T-cell (primary cell): ENCODE measurements at regions of chr18 and their contacts with region 1.

Region 1: DNA sequence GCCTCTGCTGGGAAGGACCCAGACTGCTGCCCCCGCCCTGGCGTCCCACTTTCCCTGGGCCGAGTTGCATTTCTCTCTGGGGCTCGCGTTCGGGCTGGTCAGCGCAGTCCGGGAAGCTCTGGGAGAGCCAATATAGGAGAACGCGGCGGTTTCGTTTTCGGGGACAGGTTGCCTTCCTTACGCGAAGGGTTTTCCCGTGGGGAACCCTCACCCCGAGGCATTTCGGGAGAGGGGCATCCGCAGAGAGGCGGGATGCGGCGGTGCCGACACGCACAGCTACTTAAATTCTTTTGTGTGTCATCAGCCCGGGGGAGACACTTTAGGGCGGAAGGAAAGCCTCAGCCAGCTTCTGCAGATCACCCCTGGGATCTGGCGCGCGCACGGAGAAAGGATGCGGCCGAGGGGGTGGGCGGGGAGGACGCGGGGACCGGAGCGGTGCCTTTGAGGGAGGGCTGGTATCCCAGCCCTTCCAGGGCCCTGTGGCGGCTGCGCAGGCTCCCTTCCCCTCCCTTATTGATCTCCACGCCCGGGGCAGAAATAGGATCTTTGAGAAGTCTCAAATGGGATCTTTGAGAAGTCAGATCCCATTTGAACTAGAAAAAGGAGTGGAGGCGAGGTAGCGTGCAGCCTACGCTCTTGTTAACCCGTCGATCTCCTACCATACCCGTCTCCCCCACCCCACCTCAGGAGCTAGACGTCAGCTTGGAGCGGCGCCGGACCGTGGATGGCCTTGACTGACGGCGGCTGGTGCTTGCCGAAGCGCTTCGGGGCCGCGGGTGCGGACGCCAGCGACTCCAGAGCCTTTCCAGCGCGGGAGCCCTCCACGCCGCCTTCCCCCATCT is 1.3 kb downstream of the GATA6 start:
- DNase-seq: peak in 1 of 35 experiments; percentile 38
- ATAC-seq: no peak
- H3K4me3 ChIP-seq: peak overlapping the region; percentile 55 to 60
- H3K4me3 Mint-ChIP-seq: peak overlapping the region; percentile 82 to 87 (median 85)
- H3K27ac ChIP-seq: no peak overlapping the region
- H3K27ac Mint-ChIP-seq: no peak overlapping the region
- H3K4me1 ChIP-seq: peaks cover 5 to 53% of the 10 kb centered on the region in 2 experiments
- H3K4me1 Mint-ChIP-seq: peaks cover 6 to 25% (median 23%) of the 10 kb centered on the region in 3 donors
- H3K27me3 ChIP-seq: peaks cover 30 to 84% of the 10 kb centered on the region in 2 experiments
- H3K27me3 Mint-ChIP-seq: peaks cover 50 to 75% of the 10 kb centered on the region in 2 donors

Region 2: GRCh38 chr18:22152134-22152533 is 18.5 kb before region 1 on chr18:
- CTCF ChIA-PET with region 1: no interaction called
- POLR2A ChIA-PET with region 1: no interaction called
- DNase-seq: no peak
- ATAC-seq: no peak
- H3K4me3 ChIP-seq: no peak overlapping the region
- H3K4me3 Mint-ChIP-seq: no peak overlapping the region
- H3K27ac ChIP-seq: no peak overlapping the region
- H3K27ac Mint-ChIP-seq: no peak overlapping the region
- H3K4me1 ChIP-seq: no peaks in the 10 kb centered on the region
- H3K4me1 Mint-ChIP-seq: no peaks in the 10 kb centered on the region
- H3K27me3 ChIP-seq: peaks cover 7 to 18% of the 10 kb centered on the region in 2 experiments
- H3K27me3 Mint-ChIP-seq: peaks cover 15 to 20% of the 10 kb centered on the region in 2 donors

Region 3: GRCh38 chr18:22394428-22394827 is 223.8 kb after region 1 on chr18:
- CTCF ChIA-PET with region 1: no interaction called
- POLR2A ChIA-PET with region 1: interaction called in 1 of 2 experiments, 11 read pairs
- DNase-seq: no peak
- ATAC-seq: no peak
- H3K4me3 ChIP-seq: no peak overlapping the region
- H3K4me3 Mint-ChIP-seq: no peak overlapping the region
- H3K27ac ChIP-seq: no peak overlapping the region
- H3K27ac Mint-ChIP-seq: no peak overlapping the region
- H3K4me1 ChIP-seq: peaks cover 0 to 6% of the 10 kb centered on the region in 2 experiments
- H3K4me1 Mint-ChIP-seq: peaks cover 0 to 11% (median 7%) of the 10 kb centered on the region in 3 donors
- H3K27me3 ChIP-seq: no peaks in the 10 kb centered on the region
- H3K27me3 Mint-ChIP-seq: no peaks in the 10 kb centered on the region